ENCODE measurements at regions of chr7 and their contacts with region 1.

Region 1: GRCh38 chr7:100705753-100706671 is at the start of gene POP7:
- DNase-seq: peak; percentile 94
- ATAC-seq: peak; percentile 93
- H3K4me3 ChIP-seq: peak within 1 kb of the TSS; percentile 93 to 98 (median 98)
- H3K27ac ChIP-seq: peak within 1 kb of the TSS; percentile 84
- H3K4me1 ChIP-seq: peaks cover 30% of the 10 kb centered on the region
- H3K27me3 ChIP-seq: no peaks in the 10 kb centered on the region
- CTCF ChIP-seq: no peak
- EP300 ChIP-seq: no peak
- POLR2A ChIP-seq: peak; percentile 51 to 89
- RAD21 ChIP-seq: no peak
- total RNA-seq, gene POP7: 91.1 and 91.5 TPM in 2 replicates

Region 2: DNA sequence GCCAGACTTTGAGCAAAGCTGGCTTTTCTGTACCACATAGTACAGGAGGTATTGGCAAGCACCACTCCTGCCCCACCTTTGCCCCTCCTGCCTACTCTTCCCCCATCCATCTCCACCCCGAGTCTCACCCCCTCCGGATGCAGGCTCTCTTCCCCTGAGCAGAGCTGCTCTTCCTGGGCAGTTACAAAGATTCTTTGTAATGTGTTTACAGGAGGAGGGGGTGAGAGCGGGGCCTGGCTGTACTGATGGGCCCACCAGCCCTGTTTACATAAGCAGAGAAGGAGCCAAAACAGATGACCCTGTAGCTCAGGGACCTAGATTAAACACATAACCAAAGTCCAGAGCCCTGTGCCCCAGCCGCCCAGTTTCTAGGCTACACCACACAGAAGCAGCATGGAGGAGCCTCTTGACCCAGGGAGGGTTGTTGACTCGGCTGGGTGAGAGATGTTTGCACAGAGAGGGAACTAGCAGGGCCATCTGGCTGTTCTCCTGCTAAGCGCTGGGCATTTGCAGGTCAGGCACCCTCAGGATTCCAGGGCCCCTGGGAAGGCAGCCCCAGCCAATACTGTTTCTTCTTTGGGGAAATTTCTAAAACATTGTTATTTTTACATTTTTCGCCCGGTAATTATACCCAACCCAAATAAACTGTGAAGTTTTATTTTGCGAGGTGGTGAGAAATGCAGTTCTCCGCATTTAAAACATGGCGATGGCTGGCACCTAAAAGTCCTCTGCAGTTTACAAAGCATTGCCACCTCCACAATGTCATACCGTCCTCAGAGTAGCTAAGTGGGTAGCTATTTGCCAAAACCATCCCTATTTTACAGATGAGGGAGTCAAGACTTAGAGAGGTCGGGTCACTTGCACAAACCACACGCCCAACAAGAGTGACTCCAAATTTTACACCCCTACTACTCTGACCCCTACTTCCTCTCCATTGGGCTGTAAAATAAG is 702.0 kb before region 1 on chr7:
- CTCF ChIA-PET with region 1: no interaction called
- POLR2A ChIA-PET with region 1: no interaction called
- in situ Hi-C with region 1: no loop called
- intact Hi-C with region 1: no loop called
- DNase-seq: peak; percentile 99
- ATAC-seq: peak; percentile 96
- H3K4me3 ChIP-seq: peak overlapping the region in 1 of 3 experiments; percentile 12; a peak in 1 of 6 replicates
- H3K27ac ChIP-seq: peak overlapping the region; percentile 96
- H3K4me1 ChIP-seq: peaks cover 97% of the 10 kb centered on the region
- H3K27me3 ChIP-seq: no peaks in the 10 kb centered on the region
- CTCF ChIP-seq: peak; percentile 35; the same call in 1 of the 2 replicates
- EP300 ChIP-seq: peak; percentile 74 to 98; a peak in 3 of 4 replicates
- POLR2A ChIP-seq: 0 out of 4 replicates have a peak, but pooled peaks of 1 of the 2 experiments have one; percentile 18
- RAD21 ChIP-seq: peak; percentile 75

Region 3: DNA sequence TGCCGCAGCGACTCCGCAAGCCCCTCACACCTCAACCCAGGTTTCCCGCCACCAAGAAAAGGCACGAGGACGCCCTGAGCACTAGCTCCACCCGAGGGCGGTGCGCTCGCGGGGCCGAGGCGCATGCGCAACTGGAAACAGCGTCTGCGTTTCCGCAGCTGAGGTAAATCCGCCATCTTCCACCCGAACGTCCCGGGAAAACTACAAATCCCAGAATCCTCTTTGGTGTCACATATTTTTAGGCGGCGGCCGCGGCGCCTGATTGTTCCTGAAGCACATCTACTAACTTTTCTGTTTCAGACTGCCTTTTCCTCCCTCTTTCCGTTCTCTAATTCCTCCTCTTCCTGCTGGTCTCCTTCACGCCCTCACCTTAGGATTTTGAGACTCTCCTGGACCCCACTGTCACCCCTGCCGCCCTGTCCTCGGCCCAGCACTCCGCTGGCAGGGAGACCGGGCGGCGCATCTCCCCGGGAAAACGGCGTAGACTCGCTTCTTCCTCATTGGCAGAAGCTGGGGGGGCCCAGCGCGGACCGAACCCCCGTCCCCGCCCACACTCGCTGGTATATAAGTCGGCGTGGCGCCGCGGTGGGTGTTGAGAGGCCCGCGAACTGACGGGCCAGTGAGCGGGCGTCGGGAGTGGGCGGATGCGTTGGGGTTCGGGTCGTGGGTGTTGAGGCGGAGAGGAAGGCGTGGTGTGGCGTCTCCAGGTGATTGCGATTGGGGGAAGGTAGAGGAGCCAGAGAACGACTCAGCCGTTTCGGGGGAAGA is 277.6 kb before region 1 on chr7 and contains the start of gene ZCWPW1:
- CTCF ChIA-PET with region 1: no interaction called
- POLR2A ChIA-PET with region 1: interaction called, 10 read pairs
- in situ Hi-C with region 1: no loop called
- intact Hi-C with region 1: no loop called
- DNase-seq: peak; percentile 91
- ATAC-seq: peak; percentile 67
- H3K4me3 ChIP-seq: peak within 1 kb of the TSS; percentile 75 to 87 (median 83)
- H3K27ac ChIP-seq: peak within 1 kb of the TSS; percentile 98
- H3K4me1 ChIP-seq: peaks cover 37% of the 10 kb centered on the region
- H3K27me3 ChIP-seq: no peaks in the 10 kb centered on the region; a peak in 1 of 5 replicates
- CTCF ChIP-seq: peak; percentile 25
- EP300 ChIP-seq: no peak; a peak in 1 of 4 replicates
- POLR2A ChIP-seq: peak in 1 of 2 experiments; percentile 98; a peak in 2 of 4 replicates
- RAD21 ChIP-seq: peak; percentile 15; the same call in 1 of the 2 replicates
- total RNA-seq, gene ZCWPW1: 2.5 and 2.6 TPM in 2 replicates

Region 4: GRCh38 chr7:100673300-100673941 is 32.6 kb before region 1 on chr7 and contains the start of gene GNB2:
- CTCF ChIA-PET with region 1: no interaction called
- POLR2A ChIA-PET with region 1: interaction called, 14 read pairs
- in situ Hi-C with region 1: no loop called
- intact Hi-C with region 1: no loop called
- DNase-seq: peak; percentile 96
- ATAC-seq: peak; percentile 65
- H3K4me3 ChIP-seq: peak within 1 kb of the TSS; percentile 92 to 97 (median 96)
- H3K27ac ChIP-seq: peak within 1 kb of the TSS; percentile 96
- H3K4me1 ChIP-seq: peaks cover 20% of the 10 kb centered on the region
- H3K27me3 ChIP-seq: peaks cover 0 to 4% of the 10 kb centered on the region in 2 experiments; a peak in 2 of 5 replicates
- CTCF ChIP-seq: no peak
- EP300 ChIP-seq: no peak
- POLR2A ChIP-seq: peak in 1 of 2 experiments; percentile 58; a peak in 1 of 4 replicates
- RAD21 ChIP-seq: peak; percentile 73
- total RNA-seq, gene GNB2: 48.3 and 64.3 TPM in 2 replicates

Region 5: GRCh38 chr7:100719523-100720319 is 13.7 kb after region 1 on chr7:
- CTCF ChIA-PET with region 1: interaction called, 37 read pairs
- POLR2A ChIA-PET with region 1: interaction called, 59 read pairs
- in situ Hi-C with region 1: no loop called
- intact Hi-C with region 1: no loop called
- DNase-seq: peak; percentile 75
- ATAC-seq: peak; percentile 60
- H3K4me3 ChIP-seq: peak overlapping the region; percentile 79 to 84 (median 82)
- H3K27ac ChIP-seq: peak overlapping the region; percentile 72
- H3K4me1 ChIP-seq: peaks cover 63% of the 10 kb centered on the region
- H3K27me3 ChIP-seq: no peaks in the 10 kb centered on the region; a peak in 1 of 5 replicates
- CTCF ChIP-seq: peak; percentile 61
- EP300 ChIP-seq: peak; percentile 12 to 64; a peak in 1 of 4 replicates
- POLR2A ChIP-seq: peak in 1 of 2 experiments; percentile 27; a peak in 2 of 4 replicates
- RAD21 ChIP-seq: no peak

Region 6: GRCh38 chr7:100785878-100786277 is 79.9 kb after region 1 on chr7:
- CTCF ChIA-PET with region 1: no interaction called
- POLR2A ChIA-PET with region 1: no interaction called
- in situ Hi-C with region 1: no loop called
- intact Hi-C with region 1: no loop called
- DNase-seq: no peak
- ATAC-seq: no peak
- H3K4me3 ChIP-seq: no peak overlapping the region
- H3K27ac ChIP-seq: no peak overlapping the region
- H3K4me1 ChIP-seq: peaks cover 6% of the 10 kb centered on the region; the same call in 1 of the 2 replicates
- H3K27me3 ChIP-seq: no peaks in the 10 kb centered on the region
- CTCF ChIP-seq: no peak
- EP300 ChIP-seq: no peak
- POLR2A ChIP-seq: no peak
- RAD21 ChIP-seq: no peak

Region 7: DNA sequence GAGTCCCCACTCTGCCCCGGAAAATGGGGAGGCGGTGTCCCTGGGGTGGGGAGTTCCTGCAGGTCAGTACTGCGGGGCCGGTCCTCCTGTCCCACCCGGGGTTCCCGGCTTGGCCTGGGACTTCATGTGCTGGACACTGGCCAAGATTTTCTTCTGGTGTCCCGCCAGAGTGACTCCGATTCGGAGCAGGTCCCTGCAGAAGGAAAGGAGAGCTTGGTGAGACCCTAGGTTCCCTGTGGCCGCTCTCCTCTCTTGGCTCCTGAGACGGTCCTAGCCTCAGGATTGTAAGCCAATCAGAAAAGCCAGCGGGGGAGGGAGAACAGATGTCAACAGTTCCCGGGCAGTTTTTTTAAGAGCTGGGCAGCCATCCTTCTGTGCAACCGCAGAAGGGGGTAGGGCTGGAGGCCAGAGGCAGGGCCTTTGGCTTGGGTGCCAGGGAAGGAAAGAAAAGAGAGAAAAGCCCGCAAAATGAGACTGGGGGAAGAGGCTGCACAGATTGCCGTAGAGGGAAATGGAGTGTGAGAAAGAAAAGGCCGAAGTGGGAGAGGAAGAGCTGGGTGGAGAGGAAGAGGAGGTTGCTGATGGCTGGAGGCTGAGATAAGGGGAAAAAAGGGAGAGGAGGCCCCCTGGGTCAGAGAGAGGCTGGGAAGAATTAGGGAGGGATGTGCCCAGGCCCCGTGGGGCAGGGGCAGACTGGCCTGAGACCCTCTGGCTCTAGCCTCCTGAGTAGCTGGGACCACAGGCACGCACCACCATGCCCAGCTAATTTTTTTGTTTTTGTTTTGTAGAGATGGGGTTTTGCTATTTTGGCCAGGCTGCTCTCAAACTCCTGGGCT is 97.6 kb after region 1 on chr7:
- CTCF ChIA-PET with region 1: no interaction called
- POLR2A ChIA-PET with region 1: interaction called, 12 read pairs
- in situ Hi-C with region 1: no loop called
- intact Hi-C with region 1: no loop called
- DNase-seq: peak; percentile 17
- ATAC-seq: no peak
- H3K4me3 ChIP-seq: no peak overlapping the region
- H3K27ac ChIP-seq: peak overlapping the region; percentile 31
- H3K4me1 ChIP-seq: peaks cover 66% of the 10 kb centered on the region
- H3K27me3 ChIP-seq: no peaks in the 10 kb centered on the region
- CTCF ChIP-seq: no peak
- EP300 ChIP-seq: no peak
- POLR2A ChIP-seq: no peak
- RAD21 ChIP-seq: no peak

Region 8: DNA sequence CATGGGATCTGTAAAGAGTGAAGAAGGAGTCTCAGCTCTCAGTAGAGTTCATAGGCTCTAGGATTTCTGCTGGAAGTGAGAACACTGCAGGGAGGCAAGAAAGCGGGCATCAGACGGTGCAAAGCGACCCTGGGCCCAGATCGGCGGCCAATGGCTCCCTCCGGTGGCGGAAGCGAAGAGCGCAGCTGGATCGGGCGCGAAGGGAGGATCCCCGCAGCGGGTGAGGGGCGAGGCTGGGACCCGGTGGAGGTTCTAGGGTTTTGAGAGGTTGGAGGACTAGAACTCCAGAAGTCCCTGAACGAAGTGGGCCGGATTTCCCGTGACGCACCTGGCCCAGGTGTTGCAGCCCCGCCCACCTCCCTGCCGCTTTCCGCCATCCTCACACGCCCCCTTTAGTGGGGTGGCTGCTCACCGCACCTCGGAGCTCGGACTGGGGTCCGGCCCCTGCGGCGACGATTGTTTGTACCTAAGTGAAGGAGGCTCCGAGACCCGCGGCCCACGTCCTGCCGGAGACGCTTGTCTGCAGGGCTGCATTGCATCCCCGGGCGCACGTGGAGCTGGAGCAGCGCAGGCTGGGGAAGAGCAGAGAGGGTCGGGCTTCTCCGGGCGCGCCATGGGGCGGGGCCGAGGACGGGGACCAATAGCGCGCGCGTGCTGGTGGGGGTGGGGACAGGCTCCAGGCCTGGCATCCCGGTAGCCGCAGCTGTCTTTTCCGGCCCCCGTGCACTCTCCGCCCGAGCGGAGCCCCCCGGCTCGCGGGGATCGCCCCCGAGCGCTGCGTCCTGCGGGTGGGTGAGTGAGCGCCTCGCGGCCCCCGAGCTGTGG is 146.2 kb after region 1 on chr7 and contains the start of gene SLC12A9:
- CTCF ChIA-PET with region 1: interaction called, 5 read pairs
- POLR2A ChIA-PET with region 1: interaction called, 29 read pairs
- in situ Hi-C with region 1: loop called (anchors 10 kb)
- intact Hi-C with region 1: no loop called
- DNase-seq: peak; percentile 73
- ATAC-seq: peak; percentile 99
- H3K4me3 ChIP-seq: peak within 1 kb of the TSS; percentile 62 to 87 (median 85)
- H3K27ac ChIP-seq: no peak within 1 kb of the TSS
- H3K4me1 ChIP-seq: peaks cover 23% of the 10 kb centered on the region
- H3K27me3 ChIP-seq: no peaks in the 10 kb centered on the region; a peak in 1 of 5 replicates
- CTCF ChIP-seq: peak; percentile 97
- EP300 ChIP-seq: no peak
- POLR2A ChIP-seq: peak in 1 of 2 experiments; percentile 59; a peak in 2 of 4 replicates
- RAD21 ChIP-seq: peak; percentile 97
- total RNA-seq, gene SLC12A9: 5.4 and 16.6 TPM in 2 replicates

Measured in HepG2 (cell line).